Psoas muscle (tissue), 8 donors: ENCODE measurements at regions of chr19 and their contacts with region 1.

Region 1: DNA sequence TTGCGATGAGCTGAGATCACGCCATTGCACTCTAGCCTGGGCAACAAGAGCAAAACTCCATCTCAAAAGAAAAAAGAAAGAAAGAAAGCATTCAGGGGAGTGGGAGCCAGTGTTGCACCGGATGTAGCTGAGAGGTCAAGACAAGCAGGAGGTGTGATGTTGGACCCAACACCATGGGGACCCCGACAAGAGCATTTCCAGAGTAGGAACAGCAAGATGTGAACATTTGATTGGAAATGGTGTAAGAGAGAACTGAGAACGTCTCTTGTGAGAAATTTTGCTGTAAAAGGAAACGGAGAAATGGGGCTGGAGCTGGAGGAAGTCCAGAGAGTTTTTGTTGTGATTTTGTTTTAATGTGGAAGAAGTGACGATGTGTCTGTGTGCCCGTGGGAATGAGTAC is 15.8 kb upstream of the DPF1 start:
- DNase-seq: no peak
- ATAC-seq: no peak
- H3K4me3 ChIP-seq: no peak overlapping the region
- H3K27ac ChIP-seq: no peak overlapping the region
- H3K4me1 ChIP-seq: no peaks in the 10 kb centered on the region
- H3K27me3 ChIP-seq: peaks cover 0 to 12% (median 2%) of the 10 kb centered on the region in 3 donors
- CTCF ChIP-seq: no peak

Region 2: GRCh38 chr19:38315657-38316476 is 76.1 kb after region 1 on chr19 and contains the start of gene YIF1B:
- intact Hi-C with region 1: loop called in 1 of 2 experiments (anchors 5 kb)
- DNase-seq: peak; percentile 97 to 98
- ATAC-seq: peak; percentile 96 to 98 (median 96)
- H3K4me3 ChIP-seq: peak within 1 kb of the TSS; percentile 81
- H3K27ac ChIP-seq: peak within 1 kb of the TSS; percentile 90
- H3K4me1 ChIP-seq: peaks cover 8% of the 10 kb centered on the region
- H3K27me3 ChIP-seq: peaks cover 0 to 8% (median 0%) of the 10 kb centered on the region in 3 donors
- CTCF ChIP-seq: no peak
- total RNA-seq, gene YIF1B: 20.1 to 27.2 (median 21.6) TPM